AG04449 (cell line): ENCODE measurements at regions of chr1 and their contacts with region 1.

Region 1: DNA sequence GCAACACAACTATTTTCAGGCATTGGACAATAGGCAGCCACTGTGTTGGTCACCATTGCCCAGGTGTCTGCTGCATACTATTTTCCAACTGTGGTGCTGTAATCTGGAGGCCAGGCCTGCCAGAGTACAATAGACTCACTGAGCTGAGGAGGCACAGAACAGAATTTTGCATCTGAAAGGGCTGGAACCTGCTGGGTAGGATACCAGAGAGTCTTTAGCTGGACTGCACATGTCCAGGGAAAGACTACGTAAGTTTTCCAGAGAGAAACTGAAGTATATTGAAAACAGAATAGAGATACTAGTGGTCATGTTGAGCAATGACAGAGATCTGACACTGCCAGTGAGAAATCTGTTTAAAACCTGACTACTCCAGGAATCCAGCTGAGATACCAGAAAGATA is 200.8 kb downstream of the RASAL2 start:
- DNase-seq: no peak
- H3K4me3 ChIP-seq: no peak overlapping the region
- CTCF ChIP-seq: no peak

Region 2: DNA sequence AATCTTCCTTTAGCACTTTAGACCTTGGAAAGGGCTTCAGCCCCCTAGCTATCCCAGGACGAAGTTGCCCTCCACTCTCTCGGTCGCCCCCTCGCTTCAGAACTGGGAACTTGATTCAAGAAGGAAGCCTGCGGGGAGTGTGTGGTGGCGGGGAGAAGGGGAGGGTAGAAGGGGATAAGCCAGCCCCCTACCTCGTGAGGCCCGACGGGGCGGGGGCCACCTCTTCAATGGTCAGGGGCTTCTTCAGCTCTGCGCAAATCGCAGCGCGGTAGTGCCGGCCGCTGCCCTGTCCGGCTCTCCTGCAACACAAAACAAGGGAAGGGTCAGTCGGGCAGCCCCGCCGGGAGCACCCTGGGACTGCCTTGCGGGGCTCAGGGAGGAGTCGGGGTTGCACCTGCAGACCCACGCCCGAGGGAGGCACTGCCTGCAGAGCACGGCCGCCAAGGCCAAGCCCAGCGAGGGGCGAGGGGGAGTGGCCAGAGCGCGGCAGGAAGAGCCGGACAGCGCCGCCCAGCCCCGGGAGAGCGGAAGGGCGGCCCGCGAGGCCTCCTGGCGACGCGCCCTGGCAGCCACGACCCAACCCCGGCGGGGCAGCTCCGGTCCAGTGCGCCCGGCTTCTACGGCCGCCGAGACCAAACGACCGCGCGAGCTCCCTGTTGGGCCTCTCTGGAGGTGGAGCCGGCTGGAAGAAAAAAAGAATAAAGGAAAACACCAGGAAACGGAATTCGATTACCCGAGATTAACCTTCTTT is 257.0 kb before region 1 on chr1:
- CTCF ChIA-PET with region 1: interaction called, 10 read pairs
- POLR2A ChIA-PET with region 1: no interaction called
- DNase-seq: no peak
- H3K4me3 ChIP-seq: peak overlapping the region; percentile 63
- CTCF ChIP-seq: peak; percentile 56